ENCODE measurements at regions of chrX and their contacts with region 1.

Region 1: GRCh38 chrX:31099536-31100090 is 27.8 kb upstream of the FTHL17 start:
- DNase-seq: peak; percentile 73
- H3K4me3 Mint-ChIP-seq: no peak overlapping the region
- H3K27ac Mint-ChIP-seq: peak overlapping the region; percentile 51
- H3K4me1 Mint-ChIP-seq: peaks cover 5% of the 10 kb centered on the region
- H3K27me3 Mint-ChIP-seq: peaks cover 3% of the 10 kb centered on the region

Region 2: DNA sequence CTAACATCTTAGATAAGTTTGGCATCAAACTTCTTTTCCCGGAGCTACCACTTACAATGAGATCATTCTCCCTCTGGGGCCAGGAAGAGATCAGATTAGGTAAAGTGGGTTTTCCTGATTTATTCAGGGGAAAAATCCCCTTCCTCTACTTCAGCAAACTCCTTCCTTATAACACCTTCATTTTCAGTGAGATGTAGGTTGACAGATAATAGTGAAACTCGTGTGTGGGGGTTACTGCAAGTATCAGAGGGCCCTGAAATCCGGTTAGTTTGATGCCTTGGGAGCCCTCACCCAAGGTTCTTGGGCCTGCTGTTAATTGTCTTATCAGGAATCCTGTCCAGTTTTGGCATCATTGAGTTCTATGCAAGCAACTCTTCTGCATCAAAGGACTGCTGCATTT is 38.5 kb before region 1 on chrX:
- CTCF ChIA-PET with region 1: no interaction called
- POLR2A ChIA-PET with region 1: no interaction called
- intact Hi-C with region 1: loop called (anchors 1 kb)
- DNase-seq: no peak
- H3K4me3 Mint-ChIP-seq: no peak overlapping the region
- H3K27ac Mint-ChIP-seq: no peak overlapping the region
- H3K4me1 Mint-ChIP-seq: peaks cover 10% of the 10 kb centered on the region
- H3K27me3 Mint-ChIP-seq: no peaks in the 10 kb centered on the region

Region 3: DNA sequence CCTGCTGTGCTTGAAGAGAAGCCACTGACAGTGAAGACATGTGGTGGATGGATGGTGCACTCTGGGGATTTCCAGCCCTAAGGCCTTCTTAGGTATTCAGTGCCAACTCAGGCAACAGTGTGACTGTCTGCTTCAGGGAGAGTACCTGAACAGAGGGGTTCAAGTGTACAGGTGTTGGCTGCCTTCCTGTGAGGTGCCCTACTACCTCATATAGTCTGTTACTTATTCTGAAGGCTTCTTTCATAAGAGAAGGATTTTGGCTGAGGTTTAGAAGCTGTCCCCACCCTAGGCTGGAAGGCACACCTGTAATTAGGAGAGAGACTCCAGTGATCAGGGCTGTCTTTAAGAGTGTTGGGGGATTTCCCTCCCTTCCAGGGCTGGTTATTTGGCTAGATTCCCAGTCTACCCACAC is 29.6 kb before region 1 on chrX:
- CTCF ChIA-PET with region 1: no interaction called
- POLR2A ChIA-PET with region 1: no interaction called
- intact Hi-C with region 1: loop called (anchors 2 kb)
- DNase-seq: peak; percentile 41
- H3K4me3 Mint-ChIP-seq: no peak overlapping the region
- H3K27ac Mint-ChIP-seq: peak overlapping the region; percentile 28
- H3K4me1 Mint-ChIP-seq: peaks cover 17% of the 10 kb centered on the region
- H3K27me3 Mint-ChIP-seq: no peaks in the 10 kb centered on the region